MCF 10A (cell line): ENCODE measurements at regions of chrX and their contacts with region 1.

Region 1: GRCh38 chrX:80430826-80431504 is 10.7 kb downstream of the TENT5D start:
- DNase-seq: peak; percentile 20
- H3K4me3 Mint-ChIP-seq: no peak overlapping the region
- H3K27ac Mint-ChIP-seq: no peak overlapping the region
- H3K4me1 Mint-ChIP-seq: no peaks in the 10 kb centered on the region
- H3K27me3 Mint-ChIP-seq: no peaks in the 10 kb centered on the region
- CTCF ChIP-seq: peak; percentile 8

Region 2: DNA sequence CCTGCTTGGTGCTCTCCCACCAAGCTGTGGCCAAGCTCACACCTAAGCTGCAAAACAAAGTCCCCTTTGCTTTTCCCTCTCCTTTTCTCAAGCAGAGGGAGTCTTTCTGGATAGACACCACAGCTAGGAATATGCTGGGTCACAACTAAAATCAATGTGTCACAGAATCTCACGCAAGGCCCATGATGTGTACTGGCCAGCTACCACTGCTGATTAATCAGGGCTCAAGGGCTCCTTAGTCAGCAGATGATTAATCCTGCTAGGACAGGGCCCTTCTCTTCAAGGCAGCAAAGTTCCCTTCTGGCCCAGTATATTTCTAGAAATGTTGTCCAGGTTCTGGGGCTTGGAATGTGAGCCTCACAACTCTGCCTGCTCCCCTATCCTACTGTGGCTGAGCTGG is 42.8 kb before region 1 on chrX:
- CTCF ChIA-PET with region 1: no interaction called
- POLR2A ChIA-PET with region 1: no interaction called
- intact Hi-C with region 1: no loop called
- DNase-seq: peak; percentile 2
- H3K4me3 Mint-ChIP-seq: no peak overlapping the region
- H3K27ac Mint-ChIP-seq: no peak overlapping the region
- H3K4me1 Mint-ChIP-seq: no peaks in the 10 kb centered on the region
- H3K27me3 Mint-ChIP-seq: no peaks in the 10 kb centered on the region
- CTCF ChIP-seq: no peak

Region 3: GRCh38 chrX:80578517-80579105 is 147.6 kb after region 1 on chrX:
- CTCF ChIA-PET with region 1: interaction called, 3 read pairs
- POLR2A ChIA-PET with region 1: no interaction called
- intact Hi-C with region 1: loop called (anchors 1 kb)
- DNase-seq: peak; percentile 45
- H3K4me3 Mint-ChIP-seq: no peak overlapping the region
- H3K27ac Mint-ChIP-seq: no peak overlapping the region
- H3K4me1 Mint-ChIP-seq: no peaks in the 10 kb centered on the region
- H3K27me3 Mint-ChIP-seq: no peaks in the 10 kb centered on the region
- CTCF ChIP-seq: peak; percentile 46